Activated CD8-positive, alpha-beta T cell treated with anti-CD3 and anti-CD28 coated beads, Interleukin-2, amount 10 ng/mL, durations not matched to agents 7 days and 5 days (primary cell): ENCODE measurements at regions of chr15 and their contacts with region 1.

Region 1: DNA sequence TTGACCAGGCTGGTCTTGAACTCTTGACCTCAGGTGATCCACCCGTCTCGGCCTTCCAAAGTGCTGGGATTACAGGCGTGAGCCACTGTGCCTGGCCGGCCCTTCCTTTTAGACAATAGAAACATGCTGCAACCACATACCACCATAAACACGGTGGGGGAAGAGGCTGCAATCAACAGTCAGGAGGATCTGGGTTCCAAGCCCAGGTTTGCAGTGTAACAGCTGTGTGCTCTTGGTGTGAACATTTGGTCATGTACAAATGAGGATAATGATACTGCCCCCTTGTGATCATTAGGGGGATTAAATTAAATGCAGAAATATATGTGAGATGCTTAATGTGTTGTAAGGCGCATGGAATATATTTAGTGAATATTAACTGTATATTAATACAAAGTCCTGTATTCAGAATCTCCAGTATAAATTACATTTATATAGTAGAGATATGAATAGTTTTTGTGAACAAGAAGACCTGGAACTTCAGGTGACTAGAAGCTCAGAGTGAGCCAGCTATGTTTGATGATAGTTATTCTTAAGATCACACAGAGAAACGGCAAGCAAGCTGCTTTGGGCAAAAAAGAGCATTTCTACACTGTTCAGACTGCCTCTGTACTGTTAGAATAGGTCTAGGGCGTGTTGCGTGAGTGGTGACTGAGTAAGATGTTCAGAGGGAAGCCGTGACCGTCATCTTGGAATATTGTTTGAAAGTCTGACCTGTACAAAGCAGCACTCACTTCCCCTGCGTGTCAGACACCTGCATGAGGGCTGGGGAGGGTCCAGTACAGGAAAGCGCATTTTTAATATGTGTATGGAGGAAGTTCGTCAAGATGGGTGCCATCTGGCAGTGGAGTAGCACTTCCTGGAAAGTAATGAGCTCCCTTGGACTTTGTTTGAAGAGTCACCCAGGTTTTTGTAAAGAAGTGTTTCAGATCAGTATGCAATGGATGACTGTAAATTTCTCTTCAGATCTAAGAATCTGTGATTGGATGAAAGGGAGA is 125.8 kb downstream of the PGPEP1L start:
- DNase-seq: peak; percentile 22
- ATAC-seq: peak; percentile 61
- H3K4me3 Mint-ChIP-seq: no peak overlapping the region
- H3K27ac Mint-ChIP-seq: no peak overlapping the region
- H3K4me1 Mint-ChIP-seq: no peaks in the 10 kb centered on the region
- H3K27me3 Mint-ChIP-seq: no peaks in the 10 kb centered on the region

Region 2: DNA sequence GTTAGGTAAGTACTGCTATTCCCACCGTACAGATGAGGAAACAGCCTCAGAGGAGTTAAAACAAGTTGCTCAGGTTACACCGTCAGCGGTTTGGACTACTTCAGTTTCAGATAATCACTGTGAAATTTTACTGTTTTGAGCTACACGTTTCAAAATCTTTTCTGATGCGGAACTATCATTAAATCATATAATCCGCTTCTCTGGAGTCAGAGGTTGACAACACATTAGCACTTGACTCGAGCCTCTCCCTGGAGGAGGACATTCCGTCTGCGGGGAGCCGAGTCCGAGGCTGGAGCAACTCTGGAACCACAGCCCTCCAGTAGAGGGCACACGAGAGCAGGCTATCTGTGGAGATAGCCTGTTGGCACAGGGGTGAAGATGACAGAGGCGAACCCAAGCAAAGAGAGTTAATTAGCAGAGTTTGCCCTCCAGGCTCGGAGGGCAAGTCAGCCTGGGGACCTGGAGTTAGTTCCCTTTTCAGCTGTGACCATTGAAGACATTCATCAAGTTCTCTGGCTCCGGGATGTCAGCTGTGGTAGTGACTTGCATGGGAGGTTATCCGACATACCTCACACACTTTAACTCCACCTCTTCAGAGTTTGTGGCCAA is 102.3 kb before region 1 on chr15:
- CTCF ChIA-PET with region 1: interaction called, 33 read pairs
- POLR2A ChIA-PET with region 1: no interaction called
- DNase-seq: peak; percentile 76
- ATAC-seq: peak; percentile 86
- H3K4me3 Mint-ChIP-seq: no peak overlapping the region
- H3K27ac Mint-ChIP-seq: no peak overlapping the region
- H3K4me1 Mint-ChIP-seq: peaks cover 27% of the 10 kb centered on the region
- H3K27me3 Mint-ChIP-seq: no peaks in the 10 kb centered on the region

Region 3: DNA sequence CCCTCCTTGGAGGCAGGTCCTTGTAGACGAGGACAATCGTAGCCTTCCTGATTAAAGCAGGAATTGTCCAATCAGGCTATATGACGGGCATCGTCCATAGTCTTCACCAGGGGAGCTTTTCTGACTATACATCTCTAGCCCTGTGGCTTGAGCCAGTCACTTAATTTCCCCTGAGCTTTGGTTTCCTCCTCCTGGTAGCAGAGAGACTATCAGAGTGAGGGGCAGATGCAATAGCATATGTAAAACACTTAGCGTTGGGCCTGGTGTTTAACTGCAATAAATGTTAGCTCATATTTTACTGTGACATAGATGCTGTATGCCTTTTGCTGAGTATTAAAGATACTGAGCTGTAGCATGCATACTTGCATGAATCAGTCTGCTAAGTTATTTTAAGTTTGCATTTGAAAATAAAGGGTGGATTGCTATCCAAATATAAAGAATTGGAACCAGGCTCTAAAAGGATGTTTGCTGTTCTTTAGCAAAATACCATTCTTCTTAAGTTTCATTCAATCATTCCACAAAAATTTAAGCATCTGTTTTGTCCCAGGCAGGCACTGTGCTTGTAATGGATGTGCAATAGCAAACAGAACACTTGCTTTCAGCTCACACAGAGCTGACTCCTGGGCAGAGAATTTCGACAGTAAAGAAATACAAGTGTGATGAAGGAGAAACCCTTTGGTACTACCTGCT is 25.5 kb before region 1 on chr15:
- CTCF ChIA-PET with region 1: interaction called, 18 read pairs
- POLR2A ChIA-PET with region 1: no interaction called
- DNase-seq: no peak
- ATAC-seq: no peak
- H3K4me3 Mint-ChIP-seq: no peak overlapping the region
- H3K27ac Mint-ChIP-seq: no peak overlapping the region
- H3K4me1 Mint-ChIP-seq: peaks cover 46% of the 10 kb centered on the region
- H3K27me3 Mint-ChIP-seq: no peaks in the 10 kb centered on the region

Region 4: DNA sequence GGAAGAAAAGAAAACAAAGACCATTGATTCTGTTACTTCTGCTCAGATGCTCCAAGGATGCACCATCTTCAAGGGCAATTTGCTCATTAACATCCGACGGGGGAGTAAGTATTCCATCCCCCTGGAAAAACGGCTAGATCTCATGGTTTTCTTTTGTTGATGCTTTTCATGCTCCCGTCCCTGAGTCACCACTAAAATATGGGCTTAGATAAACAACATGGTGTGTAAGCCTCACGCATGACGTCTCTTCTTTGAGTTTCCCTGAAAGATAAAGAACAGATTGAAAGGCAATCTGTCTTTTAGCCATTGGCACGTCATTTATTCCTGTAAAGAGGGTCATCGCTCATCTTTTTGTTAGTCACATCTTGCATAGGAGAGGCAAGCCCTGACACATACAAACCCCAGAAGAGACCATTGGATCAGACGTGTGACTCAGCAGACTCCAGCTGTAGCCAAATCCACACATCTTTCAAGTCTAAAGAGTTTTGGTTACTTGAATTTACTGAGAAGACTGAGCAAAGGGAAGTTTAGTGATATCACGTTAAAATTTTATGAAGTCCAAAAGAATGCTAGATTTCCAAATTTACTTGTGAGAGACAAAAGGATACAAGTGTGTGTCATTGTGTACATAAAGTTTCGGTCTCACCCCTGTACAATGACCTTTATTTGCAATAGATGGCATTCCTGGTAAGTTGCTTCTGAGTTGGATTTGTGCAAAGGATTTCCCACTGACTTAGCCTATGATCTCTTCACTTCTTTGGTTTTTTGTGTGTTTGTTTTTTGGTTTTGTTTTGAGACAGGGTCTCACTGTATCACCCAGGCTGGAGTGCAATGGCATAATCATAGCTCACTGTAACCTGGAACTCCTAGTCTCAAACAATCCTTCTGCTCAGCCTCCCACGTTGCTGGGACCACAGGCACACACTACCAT is 15.2 kb after region 1 on chr15:
- CTCF ChIA-PET with region 1: interaction called, 12 read pairs
- POLR2A ChIA-PET with region 1: no interaction called
- DNase-seq: no peak
- ATAC-seq: no peak
- H3K4me3 Mint-ChIP-seq: no peak overlapping the region
- H3K27ac Mint-ChIP-seq: no peak overlapping the region
- H3K4me1 Mint-ChIP-seq: no peaks in the 10 kb centered on the region
- H3K27me3 Mint-ChIP-seq: no peaks in the 10 kb centered on the region